ENCODE measurements at regions of chr2 and their contacts with region 1.

Region 1: DNA sequence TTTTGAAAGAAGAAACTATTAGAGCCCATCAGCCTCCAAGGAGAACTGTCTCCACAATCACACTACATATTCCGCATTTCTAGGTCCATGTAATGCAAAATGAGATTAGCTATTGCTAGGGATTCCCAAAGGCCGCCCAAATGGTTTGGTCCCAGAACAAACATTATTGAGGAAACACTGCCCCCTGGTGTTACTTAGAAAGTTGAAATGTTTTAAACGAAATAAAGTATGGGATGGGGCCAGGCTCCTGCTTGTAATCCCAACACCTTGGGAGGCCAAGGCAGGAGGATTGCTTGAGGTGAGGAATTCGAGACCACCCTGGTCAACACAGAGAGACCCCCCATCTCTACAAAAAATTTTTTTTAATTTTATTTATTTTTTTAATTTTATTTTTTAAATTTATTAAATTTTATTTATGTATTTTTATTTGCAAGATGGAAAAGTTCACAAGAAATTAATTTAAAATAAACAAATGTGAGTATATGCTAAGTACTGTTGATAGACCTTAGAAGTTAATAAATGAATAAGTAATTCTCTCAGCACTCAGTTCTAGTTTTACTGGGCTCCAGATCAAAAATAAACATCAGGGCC is 5.5 kb downstream of the NHEJ1 start:
- DNase-seq: peak; percentile 73
- H3K4me3 ChIP-seq: no peak overlapping the region
- H3K27ac ChIP-seq: no peak overlapping the region
- H3K4me1 ChIP-seq: peaks cover 0 to 5% of the 10 kb centered on the region in 2 experiments; a peak in 1 of 4 replicates
- H3K27me3 ChIP-seq: no peaks in the 10 kb centered on the region
- CTCF ChIP-seq: peak; percentile 67
- EP300 ChIP-seq: no peak
- RAD21 ChIP-seq: peak; percentile 90

Region 2: GRCh38 chr2:218618102-218618860 is 536.9 kb before region 1 on chr2:
- CTCF ChIA-PET with region 1: no interaction called
- POLR2A ChIA-PET with region 1: no interaction called
- DNase-seq: peak; percentile 50
- H3K4me3 ChIP-seq: no peak overlapping the region
- H3K27ac ChIP-seq: no peak overlapping the region
- H3K4me1 ChIP-seq: no peaks in the 10 kb centered on the region
- H3K27me3 ChIP-seq: no peaks in the 10 kb centered on the region
- CTCF ChIP-seq: peak; percentile 36
- EP300 ChIP-seq: no peak
- RAD21 ChIP-seq: peak; percentile 72

Region 3: GRCh38 chr2:218995972-218996711 is 159.0 kb before region 1 on chr2:
- CTCF ChIA-PET with region 1: interaction called, 28 read pairs
- POLR2A ChIA-PET with region 1: interaction called, 4 read pairs
- DNase-seq: peak; percentile 96
- H3K4me3 ChIP-seq: peak overlapping the region; percentile 57 to 61
- H3K27ac ChIP-seq: peak overlapping the region in 1 of 2 experiments; percentile 99; a peak in 2 of 4 replicates
- H3K4me1 ChIP-seq: peaks cover 0 to 61% of the 10 kb centered on the region in 2 experiments; a peak in 2 of 4 replicates
- H3K27me3 ChIP-seq: no peaks in the 10 kb centered on the region
- CTCF ChIP-seq: peak; percentile 85
- EP300 ChIP-seq: 0 out of 4 replicates have a peak, but pooled peaks of 1 of the 2 experiments have one; percentile 24
- RAD21 ChIP-seq: peak; percentile 96

Region 4: DNA sequence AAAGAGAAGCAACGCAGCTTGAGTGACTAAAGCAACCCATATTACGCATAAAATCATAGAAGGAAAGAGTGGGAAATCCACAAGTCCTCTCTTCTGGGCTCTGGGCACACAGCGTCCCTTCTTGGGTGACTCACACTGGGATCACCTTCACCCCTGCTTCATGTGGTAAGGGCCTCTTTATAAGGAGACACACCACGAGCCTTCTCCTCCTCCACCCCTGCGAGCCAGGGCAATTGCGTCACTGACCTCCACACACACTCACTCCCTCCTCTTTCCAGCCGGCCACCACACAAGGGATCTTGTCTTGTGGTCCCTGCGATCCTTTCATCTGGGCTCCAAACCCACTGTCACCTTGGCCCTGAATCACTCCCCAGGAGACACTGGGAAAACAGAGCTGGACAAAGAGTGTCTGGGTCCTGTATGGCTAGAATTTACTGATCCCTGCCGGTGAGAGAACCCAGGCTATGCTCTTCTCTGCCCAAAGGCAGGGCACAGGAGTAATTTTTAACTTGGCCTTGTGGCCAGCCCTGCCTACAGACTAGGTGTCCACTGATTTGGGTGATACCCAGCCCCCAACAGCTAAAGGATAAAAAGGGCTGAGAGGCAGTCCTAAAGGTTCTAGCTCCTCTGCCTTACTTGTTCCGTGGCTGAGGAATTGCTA is 29.8 kb before region 1 on chr2:
- CTCF ChIA-PET with region 1: interaction called, 40 read pairs
- POLR2A ChIA-PET with region 1: no interaction called
- DNase-seq: no peak
- H3K4me3 ChIP-seq: no peak overlapping the region
- H3K27ac ChIP-seq: no peak overlapping the region
- H3K4me1 ChIP-seq: no peaks in the 10 kb centered on the region; a peak in 2 of 4 replicates
- H3K27me3 ChIP-seq: no peaks in the 10 kb centered on the region
- CTCF ChIP-seq: no peak
- EP300 ChIP-seq: no peak
- RAD21 ChIP-seq: no peak

Region 5: GRCh38 chr2:219171231-219171651 is 16.1 kb after region 1 on chr2:
- CTCF ChIA-PET with region 1: interaction called, 104 read pairs
- POLR2A ChIA-PET with region 1: no interaction called
- DNase-seq: peak; percentile 73
- H3K4me3 ChIP-seq: no peak overlapping the region; a peak in 1 of 4 replicates
- H3K27ac ChIP-seq: peak overlapping the region; percentile 4 to 5; a peak in 2 of 4 replicates
- H3K4me1 ChIP-seq: peaks cover 0 to 8% of the 10 kb centered on the region in 2 experiments; a peak in 2 of 4 replicates
- H3K27me3 ChIP-seq: no peaks in the 10 kb centered on the region
- CTCF ChIP-seq: peak; percentile 81
- EP300 ChIP-seq: no peak
- RAD21 ChIP-seq: peak; percentile 62